Prostate gland (tissue), 2 donors: ENCODE measurements at regions of chr20 and their contacts with region 1.

Region 1: DNA sequence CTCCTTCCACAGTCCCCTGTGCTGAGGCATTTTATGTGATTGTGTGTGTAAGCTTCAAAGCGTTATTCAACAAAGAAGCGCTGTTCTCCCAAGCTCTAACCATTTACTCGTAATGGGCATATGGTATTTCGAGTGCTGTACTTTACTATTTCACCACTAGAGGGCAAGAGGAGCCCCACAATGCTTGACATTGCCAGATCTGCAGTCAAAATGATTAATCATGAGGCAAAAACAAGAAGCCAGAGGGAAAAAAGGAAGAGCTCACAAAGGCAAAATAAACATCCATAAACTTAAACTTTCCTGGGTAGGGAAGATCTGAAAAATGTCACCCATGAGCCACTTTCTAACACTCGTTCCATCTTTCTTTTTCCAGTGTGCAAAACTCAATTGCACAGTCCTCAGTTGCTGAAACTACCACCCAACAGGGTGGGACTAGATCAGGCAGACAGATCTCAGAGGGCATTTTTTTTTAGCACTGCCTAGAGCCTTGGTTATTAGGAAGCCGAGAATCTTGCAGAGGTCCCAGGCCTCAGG is 215.0 kb upstream of the PLCB4 start:
- DNase-seq: peak; percentile 43
- H3K4me3 ChIP-seq: no peak overlapping the region
- H3K27ac ChIP-seq: peak overlapping the region in 1 of 2 donors; percentile 22
- H3K4me1 ChIP-seq: no peaks in the 10 kb centered on the region
- H3K27me3 ChIP-seq: no peaks in the 10 kb centered on the region
- CTCF ChIP-seq: peak; percentile 58 to 89 (median 83)
- POLR2A ChIP-seq: no peak

Region 2: DNA sequence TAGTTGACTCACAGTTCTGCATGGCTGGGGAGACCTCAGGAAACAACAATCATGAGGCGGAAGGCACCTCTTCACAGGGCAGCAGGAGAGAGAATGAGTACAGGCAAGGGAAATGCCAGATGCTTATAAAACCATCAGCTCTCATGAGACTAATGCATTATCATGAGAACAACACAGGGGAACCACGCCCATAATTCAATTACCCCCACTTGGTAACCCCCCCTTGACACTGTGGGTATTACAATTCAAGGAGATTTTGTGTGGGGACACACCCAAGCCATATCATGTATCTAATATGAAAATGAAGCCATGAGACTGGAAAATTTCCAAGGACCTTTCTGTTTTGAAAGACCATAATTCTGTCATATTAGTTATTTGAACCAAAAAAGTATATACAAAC is 127.4 kb before region 1 on chr20:
- intact Hi-C with region 1: no loop called
- DNase-seq: no peak
- H3K4me3 ChIP-seq: no peak overlapping the region
- H3K27ac ChIP-seq: no peak overlapping the region
- H3K4me1 ChIP-seq: no peaks in the 10 kb centered on the region
- H3K27me3 ChIP-seq: no peaks in the 10 kb centered on the region
- CTCF ChIP-seq: no peak
- POLR2A ChIP-seq: no peak

Region 3: DNA sequence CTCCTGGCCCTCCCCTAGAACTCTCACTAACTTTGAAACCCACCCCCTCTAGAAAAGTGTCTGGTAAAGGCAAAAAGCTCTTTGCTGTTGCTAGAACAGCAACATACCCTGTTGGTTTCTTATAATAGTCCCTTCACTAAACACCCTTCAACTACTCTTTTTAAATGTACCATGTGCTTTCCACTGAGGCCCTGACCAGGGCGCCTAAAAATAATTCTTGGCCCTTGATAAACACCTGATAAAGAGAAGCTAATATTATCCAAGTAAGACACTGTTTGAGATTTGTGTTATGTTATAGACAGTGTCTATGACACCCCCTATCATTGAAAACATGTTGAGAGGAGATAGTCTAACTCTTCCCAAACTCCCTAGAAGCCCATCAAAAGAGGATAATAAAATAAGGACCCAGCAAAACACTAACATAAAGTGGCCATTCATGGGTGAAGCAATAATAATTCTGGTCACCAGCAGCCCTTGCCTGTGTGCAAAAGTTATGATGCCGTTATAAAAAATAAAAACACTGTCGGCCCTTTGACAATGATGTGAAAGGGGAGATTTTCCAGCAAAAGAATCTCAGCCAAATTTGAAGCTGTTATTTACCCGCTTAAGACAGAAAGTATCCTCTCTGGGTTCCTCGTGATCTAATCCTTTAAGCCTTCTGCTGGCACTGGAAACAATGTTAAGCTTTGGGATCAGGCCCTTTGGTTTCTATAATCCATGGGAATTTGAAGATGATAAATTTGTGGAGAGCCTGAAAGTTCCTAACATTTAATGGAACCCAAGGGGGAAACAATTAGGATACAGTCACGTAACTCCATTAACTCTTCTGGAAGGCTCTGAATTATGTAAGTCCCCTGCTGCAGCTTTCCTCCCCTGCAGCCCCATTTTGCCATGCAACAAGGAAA is 92.4 kb after region 1 on chr20:
- intact Hi-C with region 1: loop called (anchors 5 kb)
- DNase-seq: no peak
- H3K4me3 ChIP-seq: no peak overlapping the region
- H3K27ac ChIP-seq: no peak overlapping the region
- H3K4me1 ChIP-seq: no peaks in the 10 kb centered on the region
- H3K27me3 ChIP-seq: no peaks in the 10 kb centered on the region
- CTCF ChIP-seq: no peak
- POLR2A ChIP-seq: no peak

Region 4: DNA sequence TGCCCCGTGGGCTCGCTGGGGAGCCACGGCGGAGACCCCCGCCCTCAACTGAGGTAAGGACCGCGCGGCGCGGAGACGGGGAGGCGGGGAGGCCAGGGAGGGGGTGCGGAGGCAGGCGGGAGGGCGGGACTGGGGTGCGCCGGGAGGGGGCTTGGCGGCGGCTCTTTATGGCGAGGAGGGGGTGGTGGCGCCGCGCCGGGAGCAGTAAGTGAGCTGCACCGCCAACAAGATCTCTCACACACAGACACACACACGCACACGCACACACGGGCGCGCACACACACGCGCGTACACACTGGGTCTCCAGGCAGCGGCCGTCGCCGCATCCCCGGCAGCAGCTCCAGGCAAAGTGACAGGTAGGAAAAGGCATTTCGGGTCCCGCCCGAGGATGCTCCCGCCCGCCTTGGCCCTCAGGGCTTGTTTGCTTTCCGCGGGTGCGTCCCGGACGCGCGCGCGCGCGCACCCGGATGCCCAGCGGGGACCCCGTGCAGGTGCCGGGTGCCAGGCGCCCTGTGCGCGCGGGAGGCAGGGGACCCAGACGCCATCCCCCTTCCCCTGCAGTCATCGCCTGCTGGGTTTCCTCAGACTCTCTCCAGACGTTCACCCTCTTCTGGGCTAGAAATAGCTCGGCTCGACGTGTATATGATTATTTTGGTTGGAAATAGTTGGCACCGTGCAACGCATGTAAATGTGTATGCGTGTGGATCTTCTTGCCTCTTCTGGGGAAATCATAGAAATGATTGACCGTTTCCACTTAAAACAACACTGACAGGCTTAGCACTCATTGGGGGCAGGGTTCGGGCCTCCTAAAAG is 215.2 kb after region 1 on chr20 and contains the start of gene PLCB4:
- intact Hi-C with region 1: loop called (anchors 2 kb)
- DNase-seq: peak; percentile 45
- H3K4me3 ChIP-seq: peak within 1 kb of the TSS; percentile 80 to 88
- H3K27ac ChIP-seq: peak within 1 kb of the TSS; percentile 78 to 81
- H3K4me1 ChIP-seq: no peaks in the 10 kb centered on the region
- H3K27me3 ChIP-seq: no peaks in the 10 kb centered on the region
- CTCF ChIP-seq: no peak
- POLR2A ChIP-seq: no peak
- total RNA-seq, gene PLCB4: 9.1 to 11.6 TPM

Region 5: GRCh38 chr20:9220874-9221547 is 367.1 kb after region 1 on chr20:
- intact Hi-C with region 1: loop called (anchors 10 kb)
- DNase-seq: no peak
- H3K4me3 ChIP-seq: no peak overlapping the region
- H3K27ac ChIP-seq: no peak overlapping the region
- H3K4me1 ChIP-seq: no peaks in the 10 kb centered on the region
- H3K27me3 ChIP-seq: no peaks in the 10 kb centered on the region
- CTCF ChIP-seq: no peak
- POLR2A ChIP-seq: no peak

Region 6: DNA sequence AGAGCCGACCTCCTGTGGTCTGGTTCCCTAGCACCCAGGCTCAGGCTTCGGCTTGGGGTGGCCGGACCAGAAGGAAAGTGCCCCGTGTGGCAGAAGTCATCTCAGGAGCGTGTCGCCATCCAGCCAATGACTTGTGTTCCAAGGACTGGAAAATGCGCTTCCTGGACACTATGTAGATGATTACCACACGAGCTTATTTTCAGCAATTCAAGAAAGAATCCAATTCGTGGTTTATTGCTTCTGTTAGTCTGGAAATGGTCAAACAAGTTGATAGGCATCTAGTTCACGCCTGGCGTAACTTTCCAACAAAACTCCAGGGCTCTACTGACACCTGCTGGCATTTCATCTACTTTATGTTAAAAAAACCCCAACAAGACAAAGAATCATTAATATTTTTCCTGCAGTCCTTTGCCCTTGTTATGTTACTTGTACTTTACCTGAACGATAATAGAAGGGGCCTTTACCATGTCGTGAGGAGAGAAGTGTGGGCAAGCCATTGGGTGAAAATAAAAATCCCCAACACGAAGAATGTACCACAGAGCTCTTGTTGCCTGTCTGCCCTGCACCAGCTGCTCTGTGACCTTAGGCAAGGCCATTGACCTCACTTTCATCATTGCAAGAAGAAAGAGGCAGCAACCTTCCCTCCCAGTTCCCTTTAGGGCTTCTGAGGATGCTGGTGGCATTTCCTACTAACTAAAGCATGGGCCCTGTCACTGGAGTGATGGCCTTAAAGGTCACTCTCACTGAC is 505.9 kb after region 1 on chr20:
- intact Hi-C with region 1: loop called (anchors 1 kb)
- DNase-seq: peak; percentile 47
- H3K4me3 ChIP-seq: no peak overlapping the region
- H3K27ac ChIP-seq: no peak overlapping the region
- H3K4me1 ChIP-seq: no peaks in the 10 kb centered on the region
- H3K27me3 ChIP-seq: no peaks in the 10 kb centered on the region
- CTCF ChIP-seq: peak; percentile 30 to 62 (median 56)
- POLR2A ChIP-seq: no peak